ENCODE measurements at regions of chr14 and their contacts with region 1.

Region 1: DNA sequence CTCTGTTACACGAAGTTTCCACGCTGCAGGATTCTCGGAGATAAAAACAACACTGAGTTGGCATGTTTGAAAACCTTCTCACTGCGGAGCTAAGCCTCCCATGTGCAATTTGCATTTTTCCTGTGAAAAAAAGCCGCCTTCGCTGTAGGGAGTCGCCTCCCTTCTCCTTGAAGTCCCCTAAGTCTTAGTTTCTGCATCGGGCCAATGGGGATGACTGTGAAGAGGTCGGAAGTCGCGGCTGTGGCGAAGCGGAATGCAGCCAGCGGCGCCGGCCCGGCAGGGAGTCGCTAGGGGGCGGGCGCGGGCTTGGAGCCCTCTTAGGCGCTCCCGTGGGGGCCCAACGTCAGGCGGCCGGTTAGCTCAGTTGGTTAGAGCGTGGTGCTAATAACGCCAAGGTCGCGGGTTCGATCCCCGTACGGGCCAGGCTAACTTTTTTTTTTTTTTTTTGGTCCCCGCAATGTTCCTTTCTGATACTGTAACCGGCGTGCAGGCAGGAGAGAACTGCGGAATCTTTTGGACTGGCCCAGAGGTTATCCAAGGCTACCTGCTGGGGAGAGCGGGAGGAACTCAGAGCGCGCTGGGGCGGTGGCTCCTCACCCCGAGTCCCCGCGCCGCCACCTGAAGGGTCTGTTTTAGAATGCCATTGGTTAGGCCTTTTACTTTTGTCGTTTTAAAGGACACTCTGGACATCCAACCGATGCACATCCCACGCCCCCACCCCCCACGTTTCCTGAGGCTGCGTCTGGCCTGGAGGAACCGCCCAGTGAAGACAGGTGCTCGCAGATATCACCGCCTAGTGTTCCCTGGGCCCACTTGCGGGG is 2.6 kb upstream of the ZNF839 start:
- DNase-seq: peak; percentile 95
- ATAC-seq: peak; percentile 69
- H3K4me3 ChIP-seq: peak overlapping the region; percentile 58 to 80 (median 69)
- H3K4me3 Mint-ChIP-seq: peak overlapping the region; percentile 96
- H3K27ac ChIP-seq: peak overlapping the region; percentile 43 to 52
- H3K27ac Mint-ChIP-seq: peak overlapping the region; percentile 99
- H3K4me1 ChIP-seq: peaks cover 38 to 53% of the 10 kb centered on the region in 2 donors
- H3K4me1 Mint-ChIP-seq: peaks cover 59% of the 10 kb centered on the region
- H3K27me3 ChIP-seq: no peaks in the 10 kb centered on the region
- H3K27me3 Mint-ChIP-seq: no peaks in the 10 kb centered on the region
- CTCF ChIP-seq: peak; percentile 78

Region 2: GRCh38 chr14:101707068-101707842 is 609.7 kb before region 1 on chr14:
- CTCF ChIA-PET with region 1: interaction called, 35 read pairs
- POLR2A ChIA-PET with region 1: no interaction called
- intact Hi-C with region 1: no loop called
- DNase-seq: peak; percentile 89
- ATAC-seq: peak; percentile 71
- H3K4me3 ChIP-seq: peak overlapping the region in 1 of 5 experiments; percentile 5
- H3K4me3 Mint-ChIP-seq: peak overlapping the region; percentile 65
- H3K27ac ChIP-seq: no peak overlapping the region
- H3K27ac Mint-ChIP-seq: peak overlapping the region; percentile 53
- H3K4me1 ChIP-seq: peaks cover 19 to 23% of the 10 kb centered on the region in 2 donors
- H3K4me1 Mint-ChIP-seq: peaks cover 22% of the 10 kb centered on the region
- H3K27me3 ChIP-seq: peaks cover 0 to 7% (median 1%) of the 10 kb centered on the region in 4 experiments
- H3K27me3 Mint-ChIP-seq: peaks cover 18% of the 10 kb centered on the region
- CTCF ChIP-seq: peak; percentile 90

Region 3: DNA sequence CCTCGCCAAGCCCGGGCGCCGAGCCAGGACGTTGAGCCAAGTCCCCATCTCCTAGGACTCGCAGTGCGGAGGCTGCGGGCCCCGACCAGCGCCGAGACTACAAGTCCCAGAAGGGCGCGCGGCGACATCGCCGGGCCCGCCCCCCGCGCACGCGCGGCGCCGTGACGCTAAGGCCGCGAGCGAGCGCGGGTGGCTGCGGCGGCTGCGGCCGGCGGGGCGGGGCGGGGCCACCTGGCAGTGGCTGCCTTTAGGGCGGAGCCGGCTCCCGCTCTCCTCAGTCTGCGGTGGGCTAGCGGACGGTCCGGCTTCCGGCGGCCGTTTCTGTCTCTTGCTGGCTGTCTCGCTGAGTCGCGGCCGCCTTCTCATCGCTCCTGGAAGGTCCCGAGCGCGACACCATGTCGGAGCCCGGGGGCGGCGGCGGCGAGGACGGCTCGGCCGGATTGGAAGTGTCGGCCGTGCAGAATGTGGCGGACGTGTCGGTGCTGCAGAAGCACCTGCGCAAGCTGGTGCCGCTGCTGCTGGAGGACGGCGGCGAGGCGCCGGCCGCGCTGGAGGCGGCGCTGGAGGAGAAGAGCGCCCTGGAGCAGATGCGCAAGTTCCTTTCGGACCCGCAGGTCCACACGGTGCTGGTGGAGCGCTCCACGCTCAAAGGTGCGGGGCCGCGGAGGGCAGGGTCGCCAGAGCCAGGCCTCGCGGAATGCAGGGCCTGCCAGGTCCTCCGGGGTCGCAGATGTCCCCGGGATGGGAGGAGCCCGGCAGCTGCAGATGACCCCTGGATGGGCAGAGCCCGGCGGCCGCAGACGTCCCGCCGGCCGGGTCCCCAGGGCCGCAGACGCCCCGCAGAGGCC is 352.4 kb before region 1 on chr14 and contains the start of gene DYNC1H1:
- CTCF ChIA-PET with region 1: interaction called, 13 read pairs
- POLR2A ChIA-PET with region 1: no interaction called
- intact Hi-C with region 1: loop called (anchors 1 kb)
- DNase-seq: peak; percentile 94
- ATAC-seq: peak; percentile 90
- H3K4me3 ChIP-seq: peak within 1 kb of the TSS; percentile 46 to 97 (median 93)
- H3K4me3 Mint-ChIP-seq: peak within 1 kb of the TSS; percentile 96
- H3K27ac ChIP-seq: peak within 1 kb of the TSS; percentile 72 to 82
- H3K27ac Mint-ChIP-seq: peak within 1 kb of the TSS; percentile 94
- H3K4me1 ChIP-seq: peaks cover 12 to 22% of the 10 kb centered on the region in 2 donors
- H3K4me1 Mint-ChIP-seq: peaks cover 42% of the 10 kb centered on the region
- H3K27me3 ChIP-seq: no peaks in the 10 kb centered on the region
- H3K27me3 Mint-ChIP-seq: no peaks in the 10 kb centered on the region
- CTCF ChIP-seq: no peak
- total RNA-seq, gene DYNC1H1: 257 TPM in 2 replicates

Region 4: GRCh38 chr14:102096214-102097114 is 220.5 kb before region 1 on chr14:
- CTCF ChIA-PET with region 1: interaction called, 16 read pairs
- POLR2A ChIA-PET with region 1: no interaction called
- intact Hi-C with region 1: no loop called
- DNase-seq: peak; percentile 69
- ATAC-seq: peak; percentile 73
- H3K4me3 ChIP-seq: no peak overlapping the region
- H3K4me3 Mint-ChIP-seq: no peak overlapping the region
- H3K27ac ChIP-seq: no peak overlapping the region
- H3K27ac Mint-ChIP-seq: no peak overlapping the region
- H3K4me1 ChIP-seq: peaks cover 0 to 3% of the 10 kb centered on the region in 2 donors
- H3K4me1 Mint-ChIP-seq: peaks cover 4% of the 10 kb centered on the region
- H3K27me3 ChIP-seq: no peaks in the 10 kb centered on the region
- H3K27me3 Mint-ChIP-seq: no peaks in the 10 kb centered on the region
- CTCF ChIP-seq: peak; percentile 78

Region 5: GRCh38 chr14:102295270-102295669 is 21.7 kb before region 1 on chr14:
- CTCF ChIA-PET with region 1: interaction called, 12 read pairs
- POLR2A ChIA-PET with region 1: no interaction called
- intact Hi-C with region 1: no loop called
- DNase-seq: no peak
- ATAC-seq: no peak
- H3K4me3 ChIP-seq: no peak overlapping the region
- H3K4me3 Mint-ChIP-seq: no peak overlapping the region
- H3K27ac ChIP-seq: no peak overlapping the region
- H3K27ac Mint-ChIP-seq: no peak overlapping the region
- H3K4me1 ChIP-seq: no peaks in the 10 kb centered on the region
- H3K4me1 Mint-ChIP-seq: no peaks in the 10 kb centered on the region
- H3K27me3 ChIP-seq: peaks cover 0 to 6% (median 0%) of the 10 kb centered on the region in 4 experiments
- H3K27me3 Mint-ChIP-seq: peaks cover 3% of the 10 kb centered on the region
- CTCF ChIP-seq: peak; percentile 12

Region 6: GRCh38 chr14:102524466-102525218 is 207.7 kb after region 1 on chr14:
- CTCF ChIA-PET with region 1: no interaction called
- POLR2A ChIA-PET with region 1: interaction called, 4 read pairs
- intact Hi-C with region 1: loop called (anchors 5 kb)
- DNase-seq: peak; percentile 92
- ATAC-seq: peak; percentile 94
- H3K4me3 ChIP-seq: peak overlapping the region; percentile 35 to 71 (median 61)
- H3K4me3 Mint-ChIP-seq: peak overlapping the region; percentile 95
- H3K27ac ChIP-seq: peak overlapping the region; percentile 56 to 63
- H3K27ac Mint-ChIP-seq: peak overlapping the region; percentile 98
- H3K4me1 ChIP-seq: peaks cover 10 to 27% of the 10 kb centered on the region in 2 donors
- H3K4me1 Mint-ChIP-seq: peaks cover 27% of the 10 kb centered on the region
- H3K27me3 ChIP-seq: no peaks in the 10 kb centered on the region
- H3K27me3 Mint-ChIP-seq: no peaks in the 10 kb centered on the region
- CTCF ChIP-seq: peak; percentile 96

Region 7: DNA sequence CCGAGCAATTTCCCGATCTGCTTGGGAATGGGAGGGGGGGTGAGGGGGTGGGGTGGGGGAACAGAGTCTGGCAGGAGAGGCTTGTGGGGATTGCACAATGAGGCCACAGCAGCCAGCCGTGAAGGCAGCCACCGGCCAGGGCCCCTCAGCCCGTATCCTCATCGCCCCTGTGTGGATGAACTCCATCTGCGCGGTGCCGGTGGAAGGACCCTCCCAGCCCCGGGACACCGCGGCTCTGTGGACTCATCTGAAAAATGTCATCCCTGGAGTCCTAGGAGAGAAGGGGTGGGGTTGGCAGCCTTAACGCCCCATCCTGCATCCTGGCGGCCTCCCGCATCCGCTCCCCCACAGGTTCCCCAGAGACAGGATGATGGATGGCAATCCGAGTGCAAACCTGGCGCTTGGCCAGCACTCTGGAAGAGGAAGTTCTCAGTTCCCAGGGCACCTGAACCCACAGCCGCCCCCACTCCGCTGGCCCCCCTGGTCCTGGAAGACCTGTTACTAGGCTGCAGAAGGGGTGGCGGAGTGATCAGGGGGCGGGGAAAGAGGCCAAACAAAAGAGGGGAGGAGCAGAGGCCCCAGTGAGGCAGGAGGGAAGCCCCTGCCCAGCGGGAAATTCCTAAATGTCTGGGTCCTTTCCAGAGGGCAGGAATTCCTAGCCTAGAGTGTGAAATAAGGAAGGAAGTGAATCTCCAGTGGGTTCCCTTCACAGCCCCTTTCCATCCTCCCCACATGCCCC is 805.1 kb after region 1 on chr14:
- CTCF ChIA-PET with region 1: no interaction called
- POLR2A ChIA-PET with region 1: no interaction called
- intact Hi-C with region 1: no loop called
- DNase-seq: peak; percentile 39
- ATAC-seq: no peak
- H3K4me3 ChIP-seq: no peak overlapping the region
- H3K4me3 Mint-ChIP-seq: peak overlapping the region; percentile 66
- H3K27ac ChIP-seq: no peak overlapping the region
- H3K27ac Mint-ChIP-seq: no peak overlapping the region
- H3K4me1 ChIP-seq: peaks cover 23% of the 10 kb centered on the region in 2 donors
- H3K4me1 Mint-ChIP-seq: peaks cover 15% of the 10 kb centered on the region
- H3K27me3 ChIP-seq: peaks cover 0 to 36% (median 17%) of the 10 kb centered on the region in 4 experiments
- H3K27me3 Mint-ChIP-seq: peaks cover 13% of the 10 kb centered on the region
- CTCF ChIP-seq: no peak

Measured in B cell (primary cell).